Activated CD8-positive, alpha-beta T cell treated with anti-CD3 and anti-CD28 coated beads for 36 hours (primary cell): ENCODE measurements at regions of chr3 and their contacts with region 1.

Region 1: GRCh38 chr3:73100741-73101559 is 39.5 kb downstream of the EBLN2 start:
- DNase-seq: peak; percentile 90
- ATAC-seq: peak; percentile 75
- H3K4me3 Mint-ChIP-seq: no peak overlapping the region
- H3K27ac Mint-ChIP-seq: no peak overlapping the region
- H3K4me1 Mint-ChIP-seq: no peaks in the 10 kb centered on the region
- H3K27me3 Mint-ChIP-seq: no peaks in the 10 kb centered on the region
- CTCF ChIP-seq: peak; percentile 88

Region 2: GRCh38 chr3:72951259-72951722 is 149.7 kb before region 1 on chr3:
- CTCF ChIA-PET with region 1: no interaction called
- POLR2A ChIA-PET with region 1: no interaction called
- intact Hi-C with region 1: no loop called
- DNase-seq: no peak
- ATAC-seq: peak; percentile 85
- H3K4me3 Mint-ChIP-seq: no peak overlapping the region
- H3K27ac Mint-ChIP-seq: no peak overlapping the region
- H3K4me1 Mint-ChIP-seq: peaks cover 17% of the 10 kb centered on the region
- H3K27me3 Mint-ChIP-seq: no peaks in the 10 kb centered on the region
- CTCF ChIP-seq: no peak

Region 3: GRCh38 chr3:73432023-73432705 is 331.2 kb after region 1 on chr3:
- CTCF ChIA-PET with region 1: interaction called, 6 read pairs
- POLR2A ChIA-PET with region 1: no interaction called
- intact Hi-C with region 1: loop called (anchors 2 kb)
- DNase-seq: peak; percentile 29
- ATAC-seq: no peak
- H3K4me3 Mint-ChIP-seq: no peak overlapping the region
- H3K27ac Mint-ChIP-seq: no peak overlapping the region
- H3K4me1 Mint-ChIP-seq: no peaks in the 10 kb centered on the region
- H3K27me3 Mint-ChIP-seq: peaks cover 4% of the 10 kb centered on the region
- CTCF ChIP-seq: peak; percentile 65

Region 4: GRCh38 chr3:73502609-73503583 is 401.9 kb after region 1 on chr3:
- CTCF ChIA-PET with region 1: interaction called, 43 read pairs
- POLR2A ChIA-PET with region 1: no interaction called
- intact Hi-C with region 1: loop called (anchors 1 kb)
- DNase-seq: peak; percentile 75
- ATAC-seq: peak; percentile 67
- H3K4me3 Mint-ChIP-seq: no peak overlapping the region
- H3K27ac Mint-ChIP-seq: no peak overlapping the region
- H3K4me1 Mint-ChIP-seq: no peaks in the 10 kb centered on the region
- H3K27me3 Mint-ChIP-seq: peaks cover 13% of the 10 kb centered on the region
- CTCF ChIP-seq: peak; percentile 79